ENCODE measurements at regions of chr11 and their contacts with region 1.

Region 1: GRCh38 chr11:122697636-122698167 is 42.2 kb downstream of the UBASH3B start:
- DNase-seq: peak in 7 of 9 donors; percentile 53 to 78 (median 69)
- ATAC-seq: peak; percentile 85
- H3K4me3 ChIP-seq: peak overlapping the region; percentile 33
- H3K4me3 Mint-ChIP-seq: peak overlapping the region; percentile 61 to 93 (median 82)
- H3K27ac ChIP-seq: peak overlapping the region; percentile 75
- H3K27ac Mint-ChIP-seq: peak overlapping the region; percentile 88 to 99 (median 96)
- H3K4me1 ChIP-seq: peaks cover 34 to 62% of the 10 kb centered on the region in 2 donors
- H3K4me1 Mint-ChIP-seq: peaks cover 53 to 99% (median 88%) of the 10 kb centered on the region in 7 donors
- H3K27me3 ChIP-seq: no peaks in the 10 kb centered on the region
- H3K27me3 Mint-ChIP-seq: peaks cover 0 to 3% (median 0%) of the 10 kb centered on the region in 5 donors

Region 2: DNA sequence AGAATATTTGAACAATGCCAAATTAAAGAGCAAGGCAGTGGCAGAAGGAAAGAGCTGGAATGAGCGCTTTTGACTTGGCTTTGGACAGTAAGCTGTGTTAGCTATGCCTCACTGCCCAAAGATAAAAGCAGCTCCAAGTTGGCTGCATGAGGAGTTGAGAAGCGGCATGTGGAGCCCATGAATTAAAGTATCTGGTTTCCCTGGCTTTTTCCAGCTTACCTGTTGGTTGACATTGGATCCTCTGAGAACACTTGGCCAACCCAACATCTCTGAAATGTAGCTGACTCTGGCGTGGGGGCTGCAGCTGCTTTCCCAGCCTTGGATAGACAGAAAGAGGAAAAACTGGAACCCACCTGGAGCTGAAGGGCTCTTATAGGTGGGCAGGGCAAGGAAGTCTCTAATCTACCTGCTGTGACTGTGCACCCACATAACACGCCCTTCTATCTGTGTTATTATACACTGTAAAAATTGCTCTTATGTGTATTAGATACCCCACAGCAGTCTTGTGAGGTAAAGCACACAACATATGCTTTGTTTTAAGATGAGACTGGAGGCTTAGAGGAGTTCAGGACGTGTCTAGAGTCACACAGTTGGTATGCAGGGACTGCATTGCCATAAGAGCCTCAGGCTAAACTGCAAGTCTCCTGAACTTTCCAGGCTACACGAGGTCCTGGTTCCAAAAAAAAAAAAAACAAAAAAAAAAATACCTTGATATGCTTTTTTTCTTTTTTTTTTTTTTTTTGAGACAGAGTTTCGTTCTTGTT is 36.3 kb before region 1 on chr11:
- CTCF ChIA-PET with region 1: interaction called, 23 read pairs
- POLR2A ChIA-PET with region 1: interaction called, 47 read pairs
- intact Hi-C with region 1: loop called in 1 of 2 experiments (anchors 1 kb)
- DNase-seq: no peak
- ATAC-seq: no peak
- H3K4me3 ChIP-seq: no peak overlapping the region
- H3K4me3 Mint-ChIP-seq: peak overlapping the region in 1 of 10 donors; percentile 35
- H3K27ac ChIP-seq: no peak overlapping the region
- H3K27ac Mint-ChIP-seq: peak overlapping the region in 7 of 9 donors; percentile 21 to 94 (median 77)
- H3K4me1 ChIP-seq: peaks cover 14 to 48% of the 10 kb centered on the region in 2 donors
- H3K4me1 Mint-ChIP-seq: peaks cover 12 to 93% (median 76%) of the 10 kb centered on the region in 7 donors
- H3K27me3 ChIP-seq: no peaks in the 10 kb centered on the region
- H3K27me3 Mint-ChIP-seq: peaks cover 0 to 22% (median 0%) of the 10 kb centered on the region in 5 donors

Region 3: GRCh38 chr11:122673701-122674100 is 24.0 kb before region 1 on chr11:
- CTCF ChIA-PET with region 1: interaction called, 29 read pairs
- POLR2A ChIA-PET with region 1: interaction called, 64 read pairs
- intact Hi-C with region 1: loop called (anchors 1 to 2 kb)
- DNase-seq: peak in 1 of 9 donors; percentile 20
- ATAC-seq: no peak
- H3K4me3 ChIP-seq: no peak overlapping the region
- H3K4me3 Mint-ChIP-seq: peak overlapping the region in 7 of 10 donors; percentile 2 to 70 (median 37)
- H3K27ac ChIP-seq: peak overlapping the region; percentile 36
- H3K27ac Mint-ChIP-seq: peak overlapping the region in 8 of 9 donors; percentile 48 to 99 (median 88)
- H3K4me1 ChIP-seq: peaks cover 43 to 70% of the 10 kb centered on the region in 2 donors
- H3K4me1 Mint-ChIP-seq: peaks cover 32 to 98% (median 83%) of the 10 kb centered on the region in 7 donors
- H3K27me3 ChIP-seq: no peaks in the 10 kb centered on the region
- H3K27me3 Mint-ChIP-seq: peaks cover 0 to 3% (median 0%) of the 10 kb centered on the region in 5 donors

Region 4: DNA sequence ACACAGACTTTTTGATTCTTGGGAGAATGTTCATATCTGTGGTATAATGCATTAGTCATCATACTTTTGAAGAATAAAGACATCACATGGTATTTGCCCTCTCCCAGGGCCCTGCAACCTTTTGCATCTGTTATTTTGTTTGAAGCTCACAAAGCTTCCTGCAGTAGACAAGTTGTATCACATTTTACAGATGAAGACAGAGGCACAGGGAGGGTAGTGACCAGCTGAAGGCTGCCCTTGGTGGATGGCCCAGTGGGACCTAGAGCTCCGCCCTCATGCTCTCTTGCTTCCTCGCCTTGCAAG is 24.2 kb after region 1 on chr11:
- CTCF ChIA-PET with region 1: interaction called, 13 read pairs
- POLR2A ChIA-PET with region 1: interaction called, 37 read pairs
- intact Hi-C with region 1: loop called (anchors 1 kb)
- DNase-seq: peak in 6 of 9 donors; percentile 10 to 42 (median 29)
- ATAC-seq: peak; percentile 44
- H3K4me3 ChIP-seq: no peak overlapping the region
- H3K4me3 Mint-ChIP-seq: peak overlapping the region in 8 of 10 donors; percentile 7 to 77 (median 44)
- H3K27ac ChIP-seq: peak overlapping the region; percentile 1
- H3K27ac Mint-ChIP-seq: peak overlapping the region in 8 of 9 donors; percentile 47 to 95 (median 81)
- H3K4me1 ChIP-seq: peaks cover 28 to 57% of the 10 kb centered on the region in 2 donors
- H3K4me1 Mint-ChIP-seq: peaks cover 51 to 86% (median 79%) of the 10 kb centered on the region in 7 donors
- H3K27me3 ChIP-seq: no peaks in the 10 kb centered on the region
- H3K27me3 Mint-ChIP-seq: peaks cover 0 to 16% (median 0%) of the 10 kb centered on the region in 5 donors

Region 5: DNA sequence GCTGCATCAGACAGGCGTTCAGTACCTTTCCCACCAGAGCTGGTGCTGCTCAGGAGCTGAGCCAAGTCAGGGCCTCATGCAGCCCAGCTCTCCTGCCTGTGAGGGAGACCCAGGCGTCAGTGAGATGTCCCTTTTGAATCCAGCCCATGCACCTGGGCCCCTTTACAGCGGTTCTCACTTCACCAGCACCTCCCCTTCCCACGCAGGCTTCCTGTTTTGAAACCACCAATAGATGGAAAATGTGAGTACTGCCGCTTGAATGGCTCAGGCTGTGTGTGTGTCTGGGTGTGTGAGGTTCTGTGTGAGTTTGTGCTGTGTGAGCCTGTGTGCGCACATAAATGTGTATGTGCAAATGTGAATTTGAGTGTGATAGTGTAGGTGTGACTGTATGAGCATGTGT is 46.2 kb after region 1 on chr11:
- CTCF ChIA-PET with region 1: interaction called, 11 read pairs
- POLR2A ChIA-PET with region 1: interaction called, 99 read pairs
- intact Hi-C with region 1: loop called (anchors 1 to 2 kb)
- DNase-seq: peak; percentile 28 to 90 (median 80)
- ATAC-seq: peak; percentile 75
- H3K4me3 ChIP-seq: peak overlapping the region; percentile 39
- H3K4me3 Mint-ChIP-seq: no peak overlapping the region
- H3K27ac ChIP-seq: peak overlapping the region; percentile 84
- H3K27ac Mint-ChIP-seq: no peak overlapping the region
- H3K4me1 ChIP-seq: peaks cover 58 to 66% of the 10 kb centered on the region in 2 donors
- H3K4me1 Mint-ChIP-seq: peaks cover 0 to 40% (median 18%) of the 10 kb centered on the region in 7 donors
- H3K27me3 ChIP-seq: no peaks in the 10 kb centered on the region
- H3K27me3 Mint-ChIP-seq: peaks cover 0 to 21% (median 0%) of the 10 kb centered on the region in 5 donors

Measured in naive thymus-derived CD4-positive, alpha-beta T cell (primary cell).